ENCODE measurements at regions of chr10 and their contacts with region 1.

Region 1: GRCh38 chr10:102185811-102186527 is 33.8 kb downstream of the NOLC1 start:
- DNase-seq: no peak
- H3K4me3 Mint-ChIP-seq: no peak overlapping the region
- H3K27ac Mint-ChIP-seq: no peak overlapping the region
- H3K4me1 Mint-ChIP-seq: peaks cover 18% of the 10 kb centered on the region
- H3K27me3 Mint-ChIP-seq: peaks cover 4% of the 10 kb centered on the region

Region 2: DNA sequence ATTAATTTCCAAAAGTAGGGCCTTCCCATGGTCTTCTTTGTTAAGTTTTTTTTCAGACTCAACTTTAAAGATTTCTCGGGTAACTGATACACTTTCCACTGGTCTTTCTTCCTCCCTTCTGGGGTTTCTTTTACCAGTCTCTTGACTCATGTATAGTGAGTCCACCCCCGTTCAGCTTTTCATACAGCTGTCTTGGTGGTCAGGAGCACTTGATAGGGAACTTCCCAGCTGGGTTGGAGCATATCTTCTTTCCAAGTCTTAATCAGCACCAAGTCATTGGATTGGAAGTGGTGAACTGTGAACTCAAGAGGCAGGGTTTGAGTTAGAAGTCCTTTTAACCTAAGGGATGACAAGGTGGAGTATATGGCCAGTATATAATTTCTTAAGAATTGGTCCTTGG is 10.9 kb after region 1 on chr10:
- intact Hi-C with region 1: loop called (anchors 1 kb)
- DNase-seq: no peak
- H3K4me3 Mint-ChIP-seq: no peak overlapping the region
- H3K27ac Mint-ChIP-seq: peak overlapping the region; percentile 79
- H3K4me1 Mint-ChIP-seq: peaks cover 8% of the 10 kb centered on the region
- H3K27me3 Mint-ChIP-seq: no peaks in the 10 kb centered on the region

Measured in activated T-helper 1 cell treated with anti-CD3 and anti-CD28 coated beads, Interleukin-12 subunit alpha, Interleukin-12 subunit beta, Interleukin-2, Interleukin-4 antibody, amounts not matched to agents 30 ng/mL and 10 ng/mL and 1 ng/mL, durations not matched to agents 14 hours and 24 hours and 36 hours (primary cell).